Caco-2 (cell line): ENCODE measurements at regions of chr10 and their contacts with region 1.

Region 1: DNA sequence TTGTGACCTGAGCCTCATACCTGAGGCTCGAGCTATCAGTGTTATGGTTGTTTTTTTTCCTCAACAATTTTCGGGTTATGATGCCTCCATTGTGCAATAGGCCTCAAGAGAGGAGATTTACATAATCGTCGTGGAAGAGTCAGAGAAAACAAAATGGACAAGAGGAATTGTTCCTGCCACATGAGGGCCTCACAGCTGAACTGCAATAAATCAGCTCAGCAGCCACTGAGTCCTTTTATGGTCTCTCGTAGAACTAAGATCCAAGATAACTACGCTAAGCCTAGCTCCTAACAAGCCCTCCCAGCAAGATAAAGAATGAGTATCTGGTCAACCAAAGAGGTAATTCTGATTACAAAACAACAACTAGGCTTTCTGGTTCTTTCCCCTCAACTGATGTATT is 336.8 kb downstream of the WDR11 start:
- DNase-seq: peak; percentile 85 to 86
- H3K4me3 ChIP-seq: no peak overlapping the region
- H3K4me3 Mint-ChIP-seq: peak overlapping the region; percentile 38
- H3K27ac Mint-ChIP-seq: peak overlapping the region; percentile 89
- H3K4me1 ChIP-seq: peaks cover 31% of the 10 kb centered on the region
- H3K4me1 Mint-ChIP-seq: peaks cover 24% of the 10 kb centered on the region
- H3K27me3 ChIP-seq: no peaks in the 10 kb centered on the region
- H3K27me3 Mint-ChIP-seq: no peaks in the 10 kb centered on the region
- CTCF ChIP-seq: peak; percentile 37 to 50

Region 2: GRCh38 chr10:120979435-120980278 is 208.3 kb before region 1 on chr10:
- CTCF ChIA-PET with region 1: no interaction called
- POLR2A ChIA-PET with region 1: no interaction called
- intact Hi-C with region 1: loop called (anchors 2 kb)
- DNase-seq: peak; percentile 94 to 97
- H3K4me3 ChIP-seq: peak overlapping the region; percentile 83
- H3K4me3 Mint-ChIP-seq: peak overlapping the region; percentile 82
- H3K27ac Mint-ChIP-seq: peak overlapping the region; percentile 93
- H3K4me1 ChIP-seq: peaks cover 60% of the 10 kb centered on the region
- H3K4me1 Mint-ChIP-seq: peaks cover 57% of the 10 kb centered on the region
- H3K27me3 ChIP-seq: no peaks in the 10 kb centered on the region
- H3K27me3 Mint-ChIP-seq: no peaks in the 10 kb centered on the region
- CTCF ChIP-seq: no peak

Region 3: GRCh38 chr10:121237718-121238117 is 49.7 kb after region 1 on chr10:
- CTCF ChIA-PET with region 1: no interaction called
- POLR2A ChIA-PET with region 1: interaction called, 3 read pairs
- intact Hi-C with region 1: loop called (anchors 2 kb)
- DNase-seq: no peak
- H3K4me3 ChIP-seq: no peak overlapping the region
- H3K4me3 Mint-ChIP-seq: no peak overlapping the region
- H3K27ac Mint-ChIP-seq: no peak overlapping the region
- H3K4me1 ChIP-seq: peaks cover 12% of the 10 kb centered on the region
- H3K4me1 Mint-ChIP-seq: peaks cover 15% of the 10 kb centered on the region
- H3K27me3 ChIP-seq: no peaks in the 10 kb centered on the region
- H3K27me3 Mint-ChIP-seq: no peaks in the 10 kb centered on the region
- CTCF ChIP-seq: peak in 1 of 2 experiments; percentile 33

Region 4: DNA sequence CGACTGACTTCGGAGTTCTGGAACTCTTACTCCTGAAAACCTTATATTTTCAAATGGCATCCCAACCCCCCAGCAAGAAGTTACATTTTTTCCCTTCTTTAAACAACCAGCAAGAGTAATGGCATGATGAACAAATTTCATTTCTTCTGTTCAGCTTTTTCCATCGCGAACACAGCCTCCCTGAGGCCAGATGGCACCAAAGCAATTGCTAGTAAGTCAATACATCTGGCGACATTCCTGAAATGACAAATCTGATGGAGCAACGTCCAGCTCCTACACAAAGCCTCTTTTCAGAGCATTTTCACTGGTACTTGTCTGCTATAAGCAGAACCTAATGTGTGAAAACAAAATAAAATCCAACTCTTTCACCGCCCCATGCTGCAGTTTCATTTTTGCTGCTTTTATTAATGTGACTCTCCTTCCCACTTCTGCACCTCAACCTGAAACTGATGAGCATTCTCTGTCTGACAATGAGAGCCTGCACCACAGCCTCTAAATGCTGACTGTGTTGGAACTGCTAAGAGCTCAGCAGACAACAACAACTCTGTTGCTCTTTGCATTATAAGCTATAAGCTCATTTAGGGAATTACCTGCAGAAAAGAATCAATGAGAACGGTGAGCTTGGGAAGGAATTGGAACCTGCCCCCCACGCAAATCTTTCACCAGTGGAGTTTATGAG is 180.5 kb after region 1 on chr10:
- CTCF ChIA-PET with region 1: interaction called, 9 read pairs
- POLR2A ChIA-PET with region 1: no interaction called
- intact Hi-C with region 1: loop called (anchors 2 kb)
- DNase-seq: peak; percentile 81 to 83
- H3K4me3 ChIP-seq: peak overlapping the region; percentile 7; the same call in 1 of the 2 replicates
- H3K4me3 Mint-ChIP-seq: peak overlapping the region; percentile 71
- H3K27ac Mint-ChIP-seq: peak overlapping the region; percentile 87
- H3K4me1 ChIP-seq: peaks cover 49% of the 10 kb centered on the region
- H3K4me1 Mint-ChIP-seq: peaks cover 43% of the 10 kb centered on the region
- H3K27me3 ChIP-seq: no peaks in the 10 kb centered on the region
- H3K27me3 Mint-ChIP-seq: no peaks in the 10 kb centered on the region
- CTCF ChIP-seq: peak in 1 of 2 experiments; percentile 22

Region 5: GRCh38 chr10:121500674-121501332 is 312.8 kb after region 1 on chr10:
- CTCF ChIA-PET with region 1: no interaction called
- POLR2A ChIA-PET with region 1: no interaction called
- intact Hi-C with region 1: loop called (anchors 2 kb)
- DNase-seq: peak; percentile 89 to 94
- H3K4me3 ChIP-seq: no peak overlapping the region
- H3K4me3 Mint-ChIP-seq: peak overlapping the region; percentile 56
- H3K27ac Mint-ChIP-seq: peak overlapping the region; percentile 90
- H3K4me1 ChIP-seq: peaks cover 47% of the 10 kb centered on the region
- H3K4me1 Mint-ChIP-seq: peaks cover 32% of the 10 kb centered on the region
- H3K27me3 ChIP-seq: no peaks in the 10 kb centered on the region
- H3K27me3 Mint-ChIP-seq: no peaks in the 10 kb centered on the region
- CTCF ChIP-seq: no peak

Region 6: DNA sequence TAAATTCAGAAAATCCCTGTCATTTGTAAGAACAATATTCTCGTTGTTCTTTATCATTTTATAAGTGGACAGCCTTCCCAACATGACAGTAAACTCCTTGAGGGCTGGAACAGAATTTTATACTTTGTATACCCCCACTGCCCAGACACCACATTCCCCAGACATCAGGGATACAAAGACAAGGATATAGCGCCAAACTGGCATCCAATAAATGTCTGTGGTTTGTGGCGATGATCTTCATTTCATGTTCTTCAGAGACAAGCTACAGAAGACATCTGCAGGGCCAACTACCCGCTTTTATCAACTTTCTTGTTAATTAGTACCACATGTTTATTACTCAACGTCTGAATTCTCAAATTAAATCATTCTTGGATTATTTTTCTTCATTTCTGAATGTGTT is 584.0 kb after region 1 on chr10:
- CTCF ChIA-PET with region 1: no interaction called
- POLR2A ChIA-PET with region 1: no interaction called
- intact Hi-C with region 1: loop called (anchors 5 kb)
- DNase-seq: no peak
- H3K4me3 ChIP-seq: no peak overlapping the region
- H3K4me3 Mint-ChIP-seq: peak overlapping the region; percentile 40
- H3K27ac Mint-ChIP-seq: peak overlapping the region; percentile 67
- H3K4me1 ChIP-seq: peaks cover 67% of the 10 kb centered on the region
- H3K4me1 Mint-ChIP-seq: peaks cover 17% of the 10 kb centered on the region
- H3K27me3 ChIP-seq: no peaks in the 10 kb centered on the region
- H3K27me3 Mint-ChIP-seq: no peaks in the 10 kb centered on the region
- CTCF ChIP-seq: no peak